Activated CD4-positive, alpha-beta T cell treated with anti-CD3 and anti-CD28 coated beads for 36 hours (primary cell): ENCODE measurements at regions of chr4 and their contacts with region 1.

Region 1: DNA sequence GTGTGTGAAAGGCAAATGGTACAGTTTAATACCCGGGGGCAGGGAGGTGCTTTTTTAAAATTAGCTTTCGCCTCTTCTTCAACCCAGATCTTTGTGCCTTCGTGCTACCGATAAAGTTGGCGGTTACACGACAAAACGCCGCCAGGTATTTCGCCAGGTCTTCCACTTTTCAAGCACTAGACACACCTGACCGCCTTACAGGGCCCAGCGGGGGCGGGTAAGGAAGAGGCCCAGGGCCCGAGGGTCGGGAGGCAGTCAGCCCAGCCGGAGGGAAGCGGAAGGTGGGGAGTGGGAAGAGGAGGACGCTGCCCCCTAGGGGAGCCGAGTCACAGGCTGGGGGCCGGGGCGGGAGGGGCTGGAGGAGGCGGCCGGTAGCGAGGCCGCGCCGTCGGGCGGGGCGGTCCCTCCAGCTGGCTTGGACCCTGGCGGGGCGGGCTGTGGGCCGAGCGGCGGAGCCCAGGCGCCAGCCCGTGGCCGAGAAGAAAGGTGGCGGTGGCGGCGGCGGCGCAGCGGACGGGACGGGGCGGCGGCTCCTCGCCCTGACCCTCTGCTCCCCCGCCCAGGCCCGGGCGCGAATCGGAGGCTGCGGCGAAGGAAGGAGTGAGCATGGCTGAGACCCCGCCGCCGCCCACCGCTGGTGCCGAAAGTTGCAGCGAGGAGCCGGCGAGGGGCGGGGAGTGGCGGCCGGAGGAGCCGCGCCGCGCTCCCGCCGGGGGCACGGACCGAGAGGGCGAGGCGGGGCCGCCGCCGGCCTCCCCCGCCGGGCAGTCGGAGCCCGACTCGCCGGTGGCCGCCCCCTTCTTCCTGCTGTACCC is 16.2 kb downstream of the UTP3 start:
- DNase-seq: peak; percentile 76
- ATAC-seq: peak; percentile 37
- H3K4me3 Mint-ChIP-seq: peak overlapping the region; percentile 90
- H3K27ac Mint-ChIP-seq: peak overlapping the region; percentile 90
- H3K4me1 Mint-ChIP-seq: peaks cover 23% of the 10 kb centered on the region
- H3K27me3 Mint-ChIP-seq: no peaks in the 10 kb centered on the region

Region 2: GRCh38 chr4:70583952-70584834 is 120.3 kb before region 1 on chr4:
- CTCF ChIA-PET with region 1: no interaction called
- POLR2A ChIA-PET with region 1: interaction called, 10 read pairs
- intact Hi-C with region 1: no loop called
- DNase-seq: no peak
- ATAC-seq: no peak
- H3K4me3 Mint-ChIP-seq: no peak overlapping the region
- H3K27ac Mint-ChIP-seq: no peak overlapping the region
- H3K4me1 Mint-ChIP-seq: no peaks in the 10 kb centered on the region
- H3K27me3 Mint-ChIP-seq: no peaks in the 10 kb centered on the region

Region 3: DNA sequence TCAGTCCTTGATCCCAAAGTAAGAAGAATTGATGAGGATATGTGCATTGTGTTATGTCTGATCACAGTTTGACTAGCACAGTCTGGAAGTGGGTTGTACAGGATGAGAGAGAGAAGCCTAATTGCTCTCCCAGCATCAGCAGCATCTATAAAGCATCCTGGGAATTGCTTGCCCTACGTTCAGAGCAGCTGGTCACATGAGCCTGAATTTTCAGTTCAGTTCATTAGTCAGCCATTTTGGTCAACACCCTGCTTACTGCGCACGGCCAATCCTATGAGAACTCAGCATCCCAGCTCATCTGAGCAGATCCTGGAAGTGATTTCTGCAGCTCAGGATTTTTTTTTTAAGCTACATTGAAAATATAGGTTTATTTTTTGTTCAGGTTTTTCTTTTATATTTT is 17.2 kb after region 1 on chr4 and contains the start of gene RUFY3:
- CTCF ChIA-PET with region 1: interaction called, 6 read pairs
- POLR2A ChIA-PET with region 1: no interaction called
- intact Hi-C with region 1: loop called in 1 of 2 experiments (anchors 2 kb)
- DNase-seq: no peak
- ATAC-seq: no peak
- H3K4me3 Mint-ChIP-seq: no peak within 1 kb of the TSS
- H3K27ac Mint-ChIP-seq: no peak within 1 kb of the TSS
- H3K4me1 Mint-ChIP-seq: peaks cover 22% of the 10 kb centered on the region
- H3K27me3 Mint-ChIP-seq: no peaks in the 10 kb centered on the region
- total RNA-seq, gene RUFY3: 10.6 to 11.2 TPM

Region 4: DNA sequence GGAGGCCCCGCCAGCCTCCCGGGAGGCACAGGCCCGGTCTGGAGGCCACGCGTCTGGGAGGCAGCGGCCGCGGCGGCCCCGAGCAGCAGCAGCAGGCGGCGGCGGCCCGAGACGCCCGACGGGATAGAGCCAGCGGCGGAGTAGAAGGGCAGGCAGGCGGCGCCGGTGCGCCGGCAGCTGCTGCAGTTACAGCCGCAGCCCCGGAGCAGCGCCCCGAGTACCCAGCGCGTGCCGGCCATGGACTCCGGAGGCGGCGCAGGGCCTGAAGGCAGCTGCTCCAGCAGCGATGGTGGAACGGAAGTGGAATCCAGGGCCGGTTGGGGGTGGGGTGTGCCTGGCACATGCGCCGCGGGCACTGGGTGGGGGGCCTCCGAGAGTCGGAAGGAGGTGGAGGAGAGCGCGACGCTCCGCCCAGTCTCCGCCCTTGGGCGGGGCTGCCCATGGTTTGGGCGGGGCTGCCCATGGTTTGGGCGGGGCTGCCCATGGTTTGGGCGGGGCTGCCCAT is 135.1 kb after region 1 on chr4 and contains the start of gene GRSF1:
- CTCF ChIA-PET with region 1: interaction called, 3 read pairs
- POLR2A ChIA-PET with region 1: no interaction called
- intact Hi-C with region 1: loop called (anchors 1 to 2 kb)
- DNase-seq: peak; percentile 98
- ATAC-seq: peak; percentile 87
- H3K4me3 Mint-ChIP-seq: peak within 1 kb of the TSS; percentile 94
- H3K27ac Mint-ChIP-seq: peak within 1 kb of the TSS; percentile 95
- H3K4me1 Mint-ChIP-seq: peaks cover 53% of the 10 kb centered on the region
- H3K27me3 Mint-ChIP-seq: no peaks in the 10 kb centered on the region
- total RNA-seq, gene GRSF1: 96.8 to 115 TPM

Region 5: DNA sequence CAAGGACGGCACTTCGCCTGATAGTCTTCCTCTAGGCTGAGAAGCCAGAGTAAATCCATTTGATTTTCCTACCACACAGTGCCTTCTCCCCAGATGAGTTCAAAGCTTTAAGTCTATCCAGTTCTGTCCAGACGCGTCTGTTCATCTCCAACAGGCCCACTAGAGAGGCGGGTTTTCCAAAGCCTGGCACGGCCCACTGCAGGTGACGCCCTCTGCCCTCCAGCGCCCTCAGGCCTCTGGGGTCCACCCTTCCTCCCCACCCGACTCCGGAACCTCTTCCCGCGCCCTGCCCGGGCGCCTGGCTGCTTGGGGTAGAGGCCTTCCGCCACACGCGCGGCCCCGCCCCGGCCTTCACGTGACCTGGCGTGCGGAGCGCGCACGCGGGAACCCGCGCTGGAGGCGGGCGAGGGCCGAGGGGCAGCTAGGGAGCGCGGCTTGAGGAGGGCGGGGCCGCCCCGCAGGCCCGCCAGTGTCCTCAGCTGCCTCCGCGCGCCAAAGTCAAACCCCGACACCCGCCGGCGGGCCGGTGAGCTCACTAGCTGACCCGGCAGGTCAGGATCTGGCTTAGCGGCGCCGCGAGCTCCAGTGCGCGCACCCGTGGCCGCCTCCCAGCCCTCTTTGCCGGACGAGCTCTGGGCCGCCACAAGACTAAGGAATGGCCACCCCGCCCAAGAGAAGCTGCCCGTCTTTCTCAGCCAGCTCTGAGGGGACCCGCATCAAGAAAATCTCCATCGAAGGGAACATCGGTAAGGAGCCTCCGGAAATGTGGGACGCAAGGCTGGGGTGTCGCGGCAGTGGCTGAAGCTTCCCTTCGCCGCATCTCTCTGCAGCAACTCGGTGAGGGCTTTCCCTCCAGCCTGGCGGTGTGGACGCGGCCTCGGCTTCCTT is 288.9 kb after region 1 on chr4 and contains the start of gene DCK:
- CTCF ChIA-PET with region 1: no interaction called
- POLR2A ChIA-PET with region 1: no interaction called
- intact Hi-C with region 1: loop called in 1 of 2 experiments (anchors 1 kb)
- DNase-seq: peak; percentile 91
- ATAC-seq: peak; percentile 86
- H3K4me3 Mint-ChIP-seq: peak within 1 kb of the TSS; percentile 96
- H3K27ac Mint-ChIP-seq: peak within 1 kb of the TSS; percentile 92
- H3K4me1 Mint-ChIP-seq: peaks cover 39% of the 10 kb centered on the region
- H3K27me3 Mint-ChIP-seq: no peaks in the 10 kb centered on the region
- total RNA-seq, gene DCK: 29.2 to 34.4 TPM

Region 6: GRCh38 chr4:71009890-71010588 is 305.5 kb after region 1 on chr4:
- CTCF ChIA-PET with region 1: no interaction called
- POLR2A ChIA-PET with region 1: no interaction called
- intact Hi-C with region 1: loop called (anchors 2 to 5 kb)
- DNase-seq: no peak
- ATAC-seq: peak; percentile 27
- H3K4me3 Mint-ChIP-seq: peak overlapping the region; percentile 21
- H3K27ac Mint-ChIP-seq: peak overlapping the region; percentile 61
- H3K4me1 Mint-ChIP-seq: peaks cover 44% of the 10 kb centered on the region
- H3K27me3 Mint-ChIP-seq: no peaks in the 10 kb centered on the region